PC-9 (cell line): ENCODE measurements at regions of chr1 and their contacts with region 1.

Region 1: GRCh38 chr1:225777583-225778336 is at the start of gene SRP9:
- DNase-seq: peak; percentile 95 to 100
- H3K4me3 ChIP-seq: peak within 1 kb of the TSS; percentile 80
- H3K27ac ChIP-seq: peak within 1 kb of the TSS; percentile 84
- H3K4me1 ChIP-seq: peaks cover 32% of the 10 kb centered on the region
- H3K27me3 ChIP-seq: no peaks in the 10 kb centered on the region
- CTCF ChIP-seq: peak; percentile 86
- total RNA-seq, gene SRP9: 291 and 406 TPM in 2 replicates

Region 2: GRCh38 chr1:225137981-225138380 is 639.8 kb before region 1 on chr1:
- CTCF ChIA-PET with region 1: no interaction called
- POLR2A ChIA-PET with region 1: no interaction called
- intact Hi-C with region 1: no loop called
- DNase-seq: no peak
- H3K4me3 ChIP-seq: no peak overlapping the region
- H3K27ac ChIP-seq: no peak overlapping the region
- H3K4me1 ChIP-seq: no peaks in the 10 kb centered on the region
- H3K27me3 ChIP-seq: no peaks in the 10 kb centered on the region
- CTCF ChIP-seq: no peak

Region 3: GRCh38 chr1:225508538-225509375 is 269.0 kb before region 1 on chr1:
- CTCF ChIA-PET with region 1: no interaction called
- POLR2A ChIA-PET with region 1: interaction called, 17 read pairs
- intact Hi-C with region 1: loop called (anchors 1 kb)
- DNase-seq: peak; percentile 65 to 98
- H3K4me3 ChIP-seq: no peak overlapping the region
- H3K27ac ChIP-seq: peak overlapping the region; percentile 93
- H3K4me1 ChIP-seq: peaks cover 36% of the 10 kb centered on the region
- H3K27me3 ChIP-seq: no peaks in the 10 kb centered on the region
- CTCF ChIP-seq: no peak

Region 4: GRCh38 chr1:225809842-225810578 is 32.2 kb after region 1 on chr1 and contains the start of gene EPHX1:
- CTCF ChIA-PET with region 1: interaction called, 5 read pairs
- POLR2A ChIA-PET with region 1: interaction called, 5 read pairs
- intact Hi-C with region 1: loop called (anchors 2 kb)
- DNase-seq: peak; percentile 76 to 95
- H3K4me3 ChIP-seq: peak within 1 kb of the TSS; percentile 92
- H3K27ac ChIP-seq: peak within 1 kb of the TSS; percentile 75
- H3K4me1 ChIP-seq: peaks cover 44% of the 10 kb centered on the region
- H3K27me3 ChIP-seq: no peaks in the 10 kb centered on the region
- CTCF ChIP-seq: no peak; the same call in 1 of the 2 replicates
- total RNA-seq, gene EPHX1: 288 and 313 TPM in 2 replicates

Region 5: GRCh38 chr1:225845571-225846259 is 68.0 kb after region 1 on chr1:
- CTCF ChIA-PET with region 1: no interaction called
- POLR2A ChIA-PET with region 1: interaction called, 4 read pairs
- intact Hi-C with region 1: loop called (anchors 1 kb)
- DNase-seq: peak; percentile 68 to 80
- H3K4me3 ChIP-seq: no peak overlapping the region
- H3K27ac ChIP-seq: no peak overlapping the region
- H3K4me1 ChIP-seq: no peaks in the 10 kb centered on the region
- H3K27me3 ChIP-seq: no peaks in the 10 kb centered on the region
- CTCF ChIP-seq: peak; percentile 81

Region 6: DNA sequence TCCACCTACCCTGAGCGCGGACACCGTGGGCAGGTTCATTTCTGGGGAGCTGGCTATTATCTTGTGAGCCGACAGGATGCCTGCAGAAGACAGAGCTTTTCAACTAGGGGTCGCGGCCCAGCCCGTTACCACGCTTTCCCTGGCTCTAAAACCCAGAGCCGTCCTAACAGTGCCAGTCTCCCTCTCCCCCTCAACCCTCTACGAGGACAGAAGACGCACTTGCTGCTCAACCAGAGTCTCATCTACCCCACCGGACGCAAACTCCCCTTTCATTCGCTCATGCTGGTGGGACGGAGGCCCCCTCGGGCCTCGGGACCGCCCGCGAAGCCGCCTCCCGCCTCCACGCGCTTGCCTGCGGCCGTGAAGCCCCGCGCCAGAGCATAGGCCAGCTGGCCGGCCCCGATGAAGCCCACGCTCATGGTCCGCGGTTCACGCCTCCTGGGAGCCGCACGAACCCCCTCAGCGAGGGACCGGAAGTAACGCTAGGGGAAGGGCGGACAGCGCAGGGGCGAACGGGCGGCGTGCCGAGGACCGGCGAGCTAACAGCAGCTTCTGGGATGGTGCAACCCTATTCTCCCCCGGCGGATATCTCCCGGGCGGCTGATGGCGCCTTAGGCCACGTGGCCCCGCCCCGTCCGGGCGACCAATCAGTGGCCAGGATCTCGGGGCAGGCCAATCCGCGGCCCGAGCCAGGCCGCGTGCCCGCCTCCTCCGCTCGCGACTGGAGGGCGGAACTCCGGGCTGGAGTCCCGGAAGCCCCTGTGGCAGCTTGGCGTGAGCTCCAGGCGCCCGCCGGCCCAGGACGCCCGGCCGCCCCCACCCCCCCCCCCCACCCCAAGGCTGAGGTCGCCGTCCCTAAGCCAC is 146.2 kb after region 1 on chr1 and contains the start of gene PYCR2:
- CTCF ChIA-PET with region 1: interaction called, 4 read pairs
- POLR2A ChIA-PET with region 1: no interaction called
- intact Hi-C with region 1: loop called (anchors 5 kb)
- DNase-seq: peak; percentile 86 to 99
- H3K4me3 ChIP-seq: peak within 1 kb of the TSS; percentile 100
- H3K27ac ChIP-seq: peak within 1 kb of the TSS; percentile 72
- H3K4me1 ChIP-seq: peaks cover 16% of the 10 kb centered on the region
- H3K27me3 ChIP-seq: no peaks in the 10 kb centered on the region
- CTCF ChIP-seq: no peak
- total RNA-seq, gene PYCR2: 100 and 112 TPM in 2 replicates